Endothelial cell of umbilical vein (primary cell): ENCODE measurements at regions of chr11 and their contacts with region 1.

Region 1: DNA sequence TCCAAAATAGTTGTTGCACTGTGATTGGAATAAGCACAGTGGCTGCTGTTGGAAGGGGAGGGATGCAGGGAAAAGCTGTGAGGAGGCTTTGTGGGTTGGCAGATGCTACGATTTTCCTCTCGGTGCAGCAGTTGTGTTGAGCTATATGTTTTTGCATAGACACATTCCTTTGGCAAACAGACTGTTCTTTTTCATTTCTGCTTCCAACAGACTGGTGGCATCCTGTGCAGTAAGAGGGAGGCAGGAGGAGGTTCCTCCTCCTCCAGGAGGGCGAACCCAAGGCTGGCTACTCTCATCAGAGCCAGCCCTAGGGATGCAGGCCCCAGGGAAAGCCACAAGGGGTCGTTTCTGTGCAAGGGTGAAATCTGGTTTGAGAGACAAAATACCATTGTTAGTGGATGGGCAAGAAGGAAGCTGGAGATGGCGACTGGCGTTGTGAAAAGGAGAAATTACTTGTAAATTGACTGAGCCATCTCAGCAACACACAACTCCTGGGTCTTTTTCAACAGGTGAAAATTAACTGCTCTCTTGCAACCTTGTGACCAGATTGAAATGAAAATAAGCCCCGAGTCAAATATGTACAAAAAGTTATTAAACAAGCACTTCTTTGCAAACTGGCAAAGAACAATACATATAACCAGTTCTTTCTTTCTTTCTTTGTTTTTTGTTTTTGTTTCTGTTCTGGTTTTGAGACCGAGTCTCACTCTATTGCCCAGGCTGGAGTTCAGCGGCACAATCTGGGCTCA is 26.5 kb upstream of the UBASH3B start:
- DNase-seq: peak; percentile 71
- H3K4me3 ChIP-seq: no peak overlapping the region
- H3K27ac ChIP-seq: no peak overlapping the region
- H3K4me1 ChIP-seq: peaks cover 6% of the 10 kb centered on the region
- H3K27me3 ChIP-seq: peaks cover 0 to 2% of the 10 kb centered on the region in 2 experiments
- CTCF ChIP-seq: peak; percentile 92 to 94
- POLR2A ChIP-seq: no peak

Region 2: GRCh38 chr11:122578168-122578825 is 50.7 kb before region 1 on chr11:
- CTCF ChIA-PET with region 1: interaction called, 9 read pairs
- POLR2A ChIA-PET with region 1: no interaction called
- dilution Hi-C with region 1: no loop called
- intact Hi-C with region 1: loop called (anchors 1 kb)
- DNase-seq: no peak
- H3K4me3 ChIP-seq: no peak overlapping the region
- H3K27ac ChIP-seq: no peak overlapping the region
- H3K4me1 ChIP-seq: no peaks in the 10 kb centered on the region
- H3K27me3 ChIP-seq: no peaks in the 10 kb centered on the region
- CTCF ChIP-seq: no peak
- POLR2A ChIP-seq: no peak

Region 3: DNA sequence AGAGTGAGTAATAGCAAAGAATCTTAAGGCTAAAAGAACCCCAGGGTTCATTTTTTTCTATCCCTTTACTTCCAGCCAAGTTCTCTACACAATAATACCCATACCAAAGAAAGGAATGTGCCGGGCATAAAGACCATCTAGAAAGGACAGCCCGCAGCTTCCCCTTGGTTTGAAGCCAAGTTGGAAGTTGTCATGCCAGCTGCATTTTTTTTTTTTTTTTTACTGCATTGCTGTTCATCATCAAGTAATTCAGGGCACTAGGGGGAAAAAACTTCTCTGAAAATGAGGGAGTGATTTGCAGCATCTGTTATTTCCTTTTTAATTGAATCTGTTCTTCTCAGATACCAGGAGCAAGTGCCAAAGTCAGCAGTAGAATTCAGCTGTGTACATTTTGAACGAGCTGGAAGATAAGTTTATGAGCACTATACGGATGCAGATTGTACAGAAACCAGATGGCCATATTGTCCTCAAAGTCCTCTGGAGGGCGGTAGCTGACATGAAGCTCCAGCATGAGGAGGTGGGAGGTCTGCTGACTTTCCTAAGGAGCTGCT is 82.9 kb after region 1 on chr11:
- CTCF ChIA-PET with region 1: interaction called, 20 read pairs
- POLR2A ChIA-PET with region 1: no interaction called
- dilution Hi-C with region 1: no loop called
- intact Hi-C with region 1: loop called (anchors 2 kb)
- DNase-seq: peak; percentile 98
- H3K4me3 ChIP-seq: no peak overlapping the region
- H3K27ac ChIP-seq: peak overlapping the region; percentile 48
- H3K4me1 ChIP-seq: peaks cover 35% of the 10 kb centered on the region
- H3K27me3 ChIP-seq: no peaks in the 10 kb centered on the region
- CTCF ChIP-seq: peak; percentile 37 to 42
- POLR2A ChIP-seq: peak; percentile 61

Region 4: DNA sequence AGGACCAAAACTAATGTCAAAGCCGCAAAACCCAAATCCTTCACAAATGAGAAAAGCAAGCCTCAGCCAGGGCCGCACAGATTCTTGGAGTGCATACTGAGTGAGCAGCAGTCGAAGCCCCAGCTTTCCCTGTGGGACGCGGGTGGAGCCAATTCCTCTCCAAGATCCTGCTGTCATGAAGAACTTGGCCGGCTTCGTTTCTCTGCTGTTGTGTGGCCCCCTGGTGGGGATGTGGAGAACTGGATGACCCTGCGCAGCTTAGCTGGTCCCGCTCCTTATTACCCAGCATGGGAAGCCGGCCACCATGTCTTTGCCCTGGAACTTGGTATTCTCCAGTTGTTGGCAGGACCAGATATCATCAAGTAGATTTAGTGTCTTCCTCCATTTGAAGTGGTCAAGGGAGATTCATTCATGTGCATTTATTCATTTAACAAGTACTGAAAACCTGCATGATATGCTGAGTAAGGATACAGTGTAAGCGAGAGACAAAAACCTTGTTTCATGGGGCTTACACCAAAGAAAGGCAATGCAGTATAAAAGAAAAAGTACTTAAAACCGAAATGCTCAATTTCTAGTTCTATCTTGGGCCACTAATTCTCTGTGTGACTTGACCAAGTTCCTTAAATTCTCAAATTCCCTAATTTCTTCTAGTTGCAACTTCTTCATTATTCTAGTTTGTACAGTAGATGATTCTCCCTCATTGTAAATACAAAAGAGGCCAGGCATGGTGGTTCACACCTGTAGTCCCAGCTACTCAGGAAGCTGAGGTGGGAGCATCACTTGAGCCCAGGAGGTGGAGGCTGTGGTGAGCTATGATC is 152.6 kb after region 1 on chr11:
- CTCF ChIA-PET with region 1: interaction called, 493 read pairs
- POLR2A ChIA-PET with region 1: no interaction called
- dilution Hi-C with region 1: no loop called
- intact Hi-C with region 1: loop called (anchors 1 kb)
- DNase-seq: peak; percentile 90
- H3K4me3 ChIP-seq: no peak overlapping the region
- H3K27ac ChIP-seq: no peak overlapping the region
- H3K4me1 ChIP-seq: peaks cover 33% of the 10 kb centered on the region
- H3K27me3 ChIP-seq: no peaks in the 10 kb centered on the region
- CTCF ChIP-seq: peak; percentile 92 to 94
- POLR2A ChIP-seq: no peak

Region 5: DNA sequence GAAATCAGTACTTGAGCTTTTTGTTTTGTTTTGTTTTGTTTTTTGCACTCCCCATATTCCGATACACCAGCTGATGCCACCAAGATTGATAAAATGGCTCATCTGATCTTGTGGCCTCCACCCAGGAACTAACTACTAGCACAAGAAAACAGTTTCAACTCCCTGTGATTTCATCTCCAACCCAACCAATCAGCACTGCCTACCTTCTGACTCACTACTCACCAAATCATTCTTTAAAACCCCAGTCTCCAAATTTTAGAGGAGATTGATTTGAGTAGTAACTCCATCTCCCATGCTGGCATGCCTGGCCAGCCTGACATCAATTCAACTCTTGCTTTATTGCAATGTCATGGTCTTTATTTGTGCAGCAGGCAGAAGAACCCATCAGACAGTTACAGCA is 193.3 kb after region 1 on chr11:
- CTCF ChIA-PET with region 1: interaction called, 10 read pairs
- POLR2A ChIA-PET with region 1: no interaction called
- dilution Hi-C with region 1: no loop called
- intact Hi-C with region 1: no loop called
- DNase-seq: no peak
- H3K4me3 ChIP-seq: no peak overlapping the region
- H3K27ac ChIP-seq: no peak overlapping the region
- H3K4me1 ChIP-seq: no peaks in the 10 kb centered on the region
- H3K27me3 ChIP-seq: no peaks in the 10 kb centered on the region
- CTCF ChIP-seq: no peak
- POLR2A ChIP-seq: no peak

Region 6: GRCh38 chr11:122853971-122854446 is 225.0 kb after region 1 on chr11:
- CTCF ChIA-PET with region 1: interaction called, 720 read pairs
- POLR2A ChIA-PET with region 1: interaction called, 4 read pairs
- dilution Hi-C with region 1: no loop called
- intact Hi-C with region 1: loop called (anchors 1 kb)
- DNase-seq: peak; percentile 78
- H3K4me3 ChIP-seq: no peak overlapping the region
- H3K27ac ChIP-seq: no peak overlapping the region
- H3K4me1 ChIP-seq: no peaks in the 10 kb centered on the region
- H3K27me3 ChIP-seq: peaks cover 0 to 3% of the 10 kb centered on the region in 2 experiments
- CTCF ChIP-seq: peak; percentile 47 to 63
- POLR2A ChIP-seq: no peak

Region 7: DNA sequence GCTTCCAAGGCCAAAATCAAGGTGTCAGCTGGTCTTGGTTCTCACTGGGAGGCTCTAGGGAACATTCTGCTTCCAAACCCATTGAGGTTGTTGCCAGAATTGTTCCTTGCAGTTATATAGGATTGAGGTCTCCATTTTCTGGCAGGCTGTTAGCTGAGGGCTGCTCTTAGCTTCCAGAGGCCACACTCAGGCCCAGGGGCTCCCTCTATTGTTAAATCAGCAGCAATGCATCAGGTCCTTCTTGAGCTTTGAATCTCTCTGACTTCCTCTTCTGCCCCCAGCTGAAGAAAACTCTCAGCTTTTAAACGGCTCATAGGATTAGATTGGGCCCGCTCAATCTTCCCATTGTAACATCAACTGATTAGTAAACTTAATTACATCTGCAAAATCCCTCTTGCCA is 392.0 kb after region 1 on chr11:
- CTCF ChIA-PET with region 1: interaction called, 25 read pairs
- POLR2A ChIA-PET with region 1: no interaction called
- dilution Hi-C with region 1: no loop called
- intact Hi-C with region 1: loop called (anchors 2 kb)
- DNase-seq: peak; percentile 32
- H3K4me3 ChIP-seq: no peak overlapping the region
- H3K27ac ChIP-seq: no peak overlapping the region
- H3K4me1 ChIP-seq: no peaks in the 10 kb centered on the region
- H3K27me3 ChIP-seq: peaks cover 3 to 16% of the 10 kb centered on the region in 2 experiments
- CTCF ChIP-seq: peak; percentile 57 to 76
- POLR2A ChIP-seq: no peak